ENCODE measurements at regions of chr3 and their contacts with region 1.

Region 1: GRCh38 chr3:98732286-98733052 is 30.7 kb upstream of the ST3GAL6 start:
- DNase-seq: peak; percentile 89
- H3K4me3 ChIP-seq: peak overlapping the region; percentile 89
- H3K4me3 Mint-ChIP-seq: peak overlapping the region; percentile 85
- H3K27ac Mint-ChIP-seq: peak overlapping the region; percentile 79
- H3K4me1 ChIP-seq: peaks cover 25% of the 10 kb centered on the region
- H3K4me1 Mint-ChIP-seq: peaks cover 17% of the 10 kb centered on the region
- H3K27me3 ChIP-seq: no peaks in the 10 kb centered on the region
- H3K27me3 Mint-ChIP-seq: no peaks in the 10 kb centered on the region
- CTCF ChIP-seq: no peak

Region 2: DNA sequence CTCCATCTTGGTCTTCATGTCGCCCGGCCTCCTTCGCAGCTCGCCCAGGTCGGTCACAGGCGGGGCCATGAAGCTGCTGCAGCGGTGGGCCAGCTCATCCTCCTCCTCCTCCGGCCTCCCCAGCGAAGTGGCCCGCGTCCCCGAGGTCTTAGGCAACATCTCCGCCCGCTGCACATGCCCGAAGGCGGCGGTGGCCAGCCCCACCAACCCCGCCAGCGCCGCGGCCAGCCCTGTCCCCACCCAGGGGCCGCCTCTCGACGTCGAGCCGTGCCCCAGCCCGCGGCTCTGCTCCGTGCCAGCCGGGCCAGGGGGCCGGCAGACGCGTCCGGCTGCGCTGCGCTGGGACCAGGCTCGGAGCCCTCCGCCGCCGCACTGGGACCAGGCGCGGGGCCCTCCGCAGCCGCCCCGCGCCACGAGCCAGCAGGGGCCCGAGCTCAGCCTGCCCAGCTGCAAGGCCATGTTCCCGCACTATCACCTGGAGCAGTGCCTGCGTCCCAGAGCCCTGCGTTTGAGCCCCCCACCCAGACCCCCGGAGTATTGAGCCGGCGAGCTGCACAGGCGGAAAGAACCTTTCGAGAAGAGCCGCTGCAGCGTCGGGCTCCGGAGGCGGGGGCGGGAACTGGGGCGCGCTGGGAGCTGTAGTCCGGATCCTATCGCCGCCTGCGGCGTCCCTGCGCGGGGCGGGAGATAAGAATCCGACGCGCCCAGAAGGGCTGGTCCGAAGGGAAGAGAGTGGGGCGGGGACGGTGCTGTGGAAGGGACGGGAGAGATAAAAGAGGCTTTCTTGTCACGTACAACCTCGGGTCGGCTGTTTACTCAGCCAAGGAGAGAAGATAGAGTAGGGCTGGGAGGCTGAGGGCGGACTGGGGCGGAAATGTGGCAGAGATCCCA is 139.2 kb before region 1 on chr3 and contains the start of gene CPOX:
- CTCF ChIA-PET with region 1: no interaction called
- POLR2A ChIA-PET with region 1: no interaction called
- intact Hi-C with region 1: loop called (anchors 2 kb)
- DNase-seq: peak; percentile 90 to 94
- H3K4me3 ChIP-seq: peak within 1 kb of the TSS; percentile 91
- H3K4me3 Mint-ChIP-seq: peak within 1 kb of the TSS; percentile 97
- H3K27ac Mint-ChIP-seq: peak within 1 kb of the TSS; percentile 55
- H3K4me1 ChIP-seq: peaks cover 13% of the 10 kb centered on the region
- H3K4me1 Mint-ChIP-seq: peaks cover 11% of the 10 kb centered on the region
- H3K27me3 ChIP-seq: no peaks in the 10 kb centered on the region
- H3K27me3 Mint-ChIP-seq: no peaks in the 10 kb centered on the region
- CTCF ChIP-seq: no peak
- total RNA-seq, gene CPOX: 24.2 and 25.0 TPM in 2 replicates

Region 3: GRCh38 chr3:98602078-98602678 is 130.3 kb before region 1 on chr3:
- CTCF ChIA-PET with region 1: interaction called, 5 read pairs
- POLR2A ChIA-PET with region 1: no interaction called
- intact Hi-C with region 1: loop called (anchors 2 kb)
- DNase-seq: peak; percentile 52 to 53
- H3K4me3 ChIP-seq: no peak overlapping the region
- H3K4me3 Mint-ChIP-seq: no peak overlapping the region
- H3K27ac Mint-ChIP-seq: no peak overlapping the region
- H3K4me1 ChIP-seq: no peaks in the 10 kb centered on the region
- H3K4me1 Mint-ChIP-seq: no peaks in the 10 kb centered on the region
- H3K27me3 ChIP-seq: no peaks in the 10 kb centered on the region
- H3K27me3 Mint-ChIP-seq: no peaks in the 10 kb centered on the region
- CTCF ChIP-seq: peak; percentile 73 to 74

Region 4: DNA sequence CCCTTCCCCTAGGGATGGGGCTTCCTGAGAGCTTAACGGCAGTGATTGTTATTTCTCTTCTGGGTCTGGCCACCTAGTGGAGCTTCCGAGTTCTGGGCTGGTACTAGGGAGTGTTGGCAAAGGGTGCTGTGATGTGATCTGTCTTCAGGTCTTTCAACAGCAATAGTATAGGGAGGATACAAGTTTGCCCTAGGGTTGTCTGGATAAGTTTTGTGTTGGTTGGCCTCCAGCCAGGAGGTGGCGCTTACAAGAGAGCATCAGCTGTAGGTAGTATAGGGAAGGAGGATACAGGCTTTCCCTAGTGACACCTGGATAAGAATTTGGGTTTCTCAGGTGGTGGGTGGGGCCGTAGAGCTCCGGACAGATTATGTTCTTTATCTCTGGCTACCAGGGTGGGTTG is 119.9 kb before region 1 on chr3:
- CTCF ChIA-PET with region 1: no interaction called
- POLR2A ChIA-PET with region 1: no interaction called
- intact Hi-C with region 1: no loop called
- DNase-seq: peak; percentile 44 to 48
- H3K4me3 ChIP-seq: no peak overlapping the region
- H3K4me3 Mint-ChIP-seq: no peak overlapping the region
- H3K27ac Mint-ChIP-seq: no peak overlapping the region
- H3K4me1 ChIP-seq: no peaks in the 10 kb centered on the region
- H3K4me1 Mint-ChIP-seq: no peaks in the 10 kb centered on the region
- H3K27me3 ChIP-seq: no peaks in the 10 kb centered on the region
- H3K27me3 Mint-ChIP-seq: no peaks in the 10 kb centered on the region
- CTCF ChIP-seq: peak; percentile 21 to 24

Region 5: GRCh38 chr3:98680723-98681122 is 51.7 kb before region 1 on chr3:
- CTCF ChIA-PET with region 1: no interaction called
- POLR2A ChIA-PET with region 1: no interaction called
- intact Hi-C with region 1: no loop called
- DNase-seq: no peak
- H3K4me3 ChIP-seq: no peak overlapping the region
- H3K4me3 Mint-ChIP-seq: no peak overlapping the region
- H3K27ac Mint-ChIP-seq: no peak overlapping the region
- H3K4me1 ChIP-seq: no peaks in the 10 kb centered on the region
- H3K4me1 Mint-ChIP-seq: no peaks in the 10 kb centered on the region
- H3K27me3 ChIP-seq: no peaks in the 10 kb centered on the region
- H3K27me3 Mint-ChIP-seq: no peaks in the 10 kb centered on the region
- CTCF ChIP-seq: no peak

Region 6: DNA sequence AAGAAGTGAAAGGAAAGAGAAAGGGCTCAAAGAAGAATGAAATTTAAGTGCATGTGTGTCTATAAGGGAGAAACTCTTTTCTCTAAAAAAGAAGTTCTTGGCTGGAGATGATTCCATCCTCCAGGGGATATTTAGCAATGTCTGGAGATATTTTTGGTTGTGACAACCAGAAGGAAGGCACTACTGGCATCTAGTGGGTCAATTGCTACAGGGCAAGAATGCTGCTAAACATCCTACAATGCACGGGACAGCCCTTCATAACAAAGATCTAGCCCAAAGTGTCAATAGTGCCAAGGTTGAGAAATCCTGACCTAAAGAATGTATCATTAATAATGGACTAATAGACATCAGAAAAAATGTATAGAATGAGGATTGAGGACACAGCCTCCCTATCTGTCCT is 26.8 kb before region 1 on chr3:
- CTCF ChIA-PET with region 1: interaction called, 4 read pairs
- POLR2A ChIA-PET with region 1: interaction called, 7 read pairs
- intact Hi-C with region 1: loop called (anchors 1 kb)
- DNase-seq: peak in 1 of 2 experiments; percentile 22
- H3K4me3 ChIP-seq: no peak overlapping the region
- H3K4me3 Mint-ChIP-seq: no peak overlapping the region
- H3K27ac Mint-ChIP-seq: no peak overlapping the region
- H3K4me1 ChIP-seq: peaks cover 48% of the 10 kb centered on the region
- H3K4me1 Mint-ChIP-seq: peaks cover 54% of the 10 kb centered on the region
- H3K27me3 ChIP-seq: no peaks in the 10 kb centered on the region
- H3K27me3 Mint-ChIP-seq: no peaks in the 10 kb centered on the region
- CTCF ChIP-seq: no peak

Region 7: GRCh38 chr3:98778852-98779413 is 46.5 kb after region 1 on chr3:
- CTCF ChIA-PET with region 1: interaction called, 4 read pairs
- POLR2A ChIA-PET with region 1: interaction called, 3 read pairs
- intact Hi-C with region 1: loop called (anchors 2 kb)
- DNase-seq: peak; percentile 57 to 73
- H3K4me3 ChIP-seq: no peak overlapping the region
- H3K4me3 Mint-ChIP-seq: no peak overlapping the region
- H3K27ac Mint-ChIP-seq: peak overlapping the region; percentile 71
- H3K4me1 ChIP-seq: peaks cover 70% of the 10 kb centered on the region
- H3K4me1 Mint-ChIP-seq: peaks cover 56% of the 10 kb centered on the region
- H3K27me3 ChIP-seq: no peaks in the 10 kb centered on the region
- H3K27me3 Mint-ChIP-seq: no peaks in the 10 kb centered on the region
- CTCF ChIP-seq: no peak

Region 8: DNA sequence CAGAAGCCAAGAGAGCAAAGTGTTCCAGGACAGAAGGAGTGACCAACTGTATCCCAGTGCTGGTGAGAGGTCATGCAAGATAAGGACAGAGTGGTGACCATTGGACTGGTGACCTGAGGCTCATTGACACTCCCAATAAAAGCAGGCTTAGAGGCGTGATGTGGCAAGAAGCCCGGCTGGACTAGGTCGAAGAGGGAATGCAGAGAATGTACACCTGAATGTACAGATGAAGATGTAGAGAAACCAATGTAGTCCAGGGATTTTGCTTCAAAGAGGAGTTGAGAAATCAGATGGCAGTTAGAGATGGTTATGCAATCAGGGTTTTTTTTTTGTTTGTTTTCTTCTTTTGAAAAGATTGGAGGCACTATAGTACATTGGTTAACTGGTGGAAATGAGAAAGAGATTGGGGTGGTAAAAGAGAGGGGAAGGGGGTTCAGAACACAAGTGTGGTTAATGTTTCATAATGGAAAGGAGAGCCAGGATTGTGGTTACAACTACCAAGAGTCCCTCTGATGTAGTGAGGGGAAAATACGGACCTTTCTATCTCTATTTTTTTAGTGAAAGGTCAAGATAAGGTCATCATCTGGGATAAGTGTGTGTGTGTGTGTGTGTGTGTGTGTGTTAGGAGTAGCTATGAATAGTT is 54.0 kb after region 1 on chr3:
- CTCF ChIA-PET with region 1: no interaction called
- POLR2A ChIA-PET with region 1: interaction called, 3 read pairs
- intact Hi-C with region 1: loop called (anchors 1 kb)
- DNase-seq: peak; percentile 91 to 95
- H3K4me3 ChIP-seq: no peak overlapping the region
- H3K4me3 Mint-ChIP-seq: peak overlapping the region; percentile 55
- H3K27ac Mint-ChIP-seq: peak overlapping the region; percentile 81
- H3K4me1 ChIP-seq: peaks cover 45% of the 10 kb centered on the region
- H3K4me1 Mint-ChIP-seq: peaks cover 25% of the 10 kb centered on the region
- H3K27me3 ChIP-seq: no peaks in the 10 kb centered on the region
- H3K27me3 Mint-ChIP-seq: no peaks in the 10 kb centered on the region
- CTCF ChIP-seq: no peak

Measured in Caco-2 (cell line).